AG04450 (cell line): ENCODE measurements at regions of chr15 and their contacts with region 1.

Region 1: GRCh38 chr15:45166834-45167630 is 20.7 kb downstream of the SHF start:
- DNase-seq: peak; percentile 53
- H3K4me3 ChIP-seq: peak overlapping the region; percentile 58
- H3K27ac ChIP-seq: peak overlapping the region; percentile 83
- H3K27me3 ChIP-seq: no peaks in the 10 kb centered on the region
- CTCF ChIP-seq: peak; percentile 71

Region 2: DNA sequence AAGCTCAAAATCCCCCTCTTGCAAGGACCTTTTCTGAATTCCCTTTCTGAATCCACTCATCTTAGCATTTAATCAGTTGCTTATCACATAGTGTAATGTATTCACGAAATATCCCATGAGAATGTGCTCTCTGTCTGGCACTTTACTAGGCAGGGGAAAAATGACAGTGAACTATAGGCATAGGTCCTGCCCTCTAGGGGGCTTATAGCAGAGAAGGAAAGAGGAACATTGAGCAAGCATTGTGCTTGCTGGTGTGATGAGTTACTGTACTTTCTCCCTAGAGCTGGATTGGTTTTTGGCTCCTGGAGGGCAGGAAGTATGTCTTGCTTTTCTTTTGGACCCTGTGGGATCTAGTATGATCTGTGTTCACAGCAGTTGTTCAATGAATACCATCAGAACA is 79.5 kb before region 1 on chr15:
- CTCF ChIA-PET with region 1: no interaction called
- POLR2A ChIA-PET with region 1: no interaction called
- DNase-seq: no peak
- H3K4me3 ChIP-seq: no peak overlapping the region
- H3K27ac ChIP-seq: no peak overlapping the region
- H3K27me3 ChIP-seq: peaks cover 11% of the 10 kb centered on the region
- CTCF ChIP-seq: no peak

Region 3: DNA sequence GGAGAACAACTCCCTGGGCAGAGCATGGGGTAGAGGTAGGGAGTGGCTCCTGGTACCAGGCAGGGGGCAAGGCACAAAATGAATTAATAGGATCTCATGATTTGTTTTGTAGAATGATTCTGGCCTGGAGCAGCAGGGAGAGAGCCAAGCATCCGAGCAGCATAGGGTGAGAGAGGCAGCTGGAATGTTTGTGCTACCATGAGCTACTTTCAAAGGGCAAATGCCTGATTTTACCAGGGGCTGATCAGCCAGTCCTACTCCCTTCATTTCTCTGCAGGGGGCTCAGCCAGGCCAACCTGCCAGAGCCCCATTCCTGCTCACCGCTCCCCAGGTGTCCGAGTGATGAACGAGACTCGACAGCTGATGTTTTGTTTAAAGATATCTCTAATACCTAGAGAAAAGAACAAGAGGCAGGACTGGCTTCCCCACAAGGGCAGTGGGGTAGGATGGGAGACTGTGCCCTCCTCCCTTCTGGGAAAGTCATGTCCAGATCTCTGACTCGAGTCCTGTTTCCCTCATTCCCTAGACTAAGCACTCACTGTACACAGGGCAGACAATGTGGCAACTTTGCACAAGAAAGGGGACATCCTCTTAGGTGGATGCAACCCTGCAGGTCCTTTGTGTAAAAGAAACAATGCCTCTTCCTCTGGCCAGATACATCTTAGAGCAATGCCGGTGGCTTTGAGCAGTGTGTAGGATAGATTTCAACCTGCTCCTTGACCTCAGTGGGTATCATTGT is 66.0 kb before region 1 on chr15:
- CTCF ChIA-PET with region 1: no interaction called
- POLR2A ChIA-PET with region 1: no interaction called
- DNase-seq: no peak
- H3K4me3 ChIP-seq: no peak overlapping the region
- H3K27ac ChIP-seq: no peak overlapping the region
- H3K27me3 ChIP-seq: peaks cover 37% of the 10 kb centered on the region
- CTCF ChIP-seq: no peak

Region 4: GRCh38 chr15:45118131-45118588 is 48.9 kb before region 1 on chr15:
- CTCF ChIA-PET with region 1: interaction called, 16 read pairs
- POLR2A ChIA-PET with region 1: interaction called, 3 read pairs
- DNase-seq: peak; percentile 76
- H3K4me3 ChIP-seq: no peak overlapping the region; the same call in 1 of the 2 replicates
- H3K27ac ChIP-seq: no peak overlapping the region
- H3K27me3 ChIP-seq: peaks cover 46% of the 10 kb centered on the region
- CTCF ChIP-seq: peak; percentile 100

Region 5: GRCh38 chr15:45179221-45179985 is 12.4 kb after region 1 on chr15:
- CTCF ChIA-PET with region 1: interaction called, 27 read pairs
- POLR2A ChIA-PET with region 1: no interaction called
- DNase-seq: no peak
- H3K4me3 ChIP-seq: no peak overlapping the region
- H3K27ac ChIP-seq: no peak overlapping the region
- H3K27me3 ChIP-seq: no peaks in the 10 kb centered on the region
- CTCF ChIP-seq: peak; percentile 39

Region 6: DNA sequence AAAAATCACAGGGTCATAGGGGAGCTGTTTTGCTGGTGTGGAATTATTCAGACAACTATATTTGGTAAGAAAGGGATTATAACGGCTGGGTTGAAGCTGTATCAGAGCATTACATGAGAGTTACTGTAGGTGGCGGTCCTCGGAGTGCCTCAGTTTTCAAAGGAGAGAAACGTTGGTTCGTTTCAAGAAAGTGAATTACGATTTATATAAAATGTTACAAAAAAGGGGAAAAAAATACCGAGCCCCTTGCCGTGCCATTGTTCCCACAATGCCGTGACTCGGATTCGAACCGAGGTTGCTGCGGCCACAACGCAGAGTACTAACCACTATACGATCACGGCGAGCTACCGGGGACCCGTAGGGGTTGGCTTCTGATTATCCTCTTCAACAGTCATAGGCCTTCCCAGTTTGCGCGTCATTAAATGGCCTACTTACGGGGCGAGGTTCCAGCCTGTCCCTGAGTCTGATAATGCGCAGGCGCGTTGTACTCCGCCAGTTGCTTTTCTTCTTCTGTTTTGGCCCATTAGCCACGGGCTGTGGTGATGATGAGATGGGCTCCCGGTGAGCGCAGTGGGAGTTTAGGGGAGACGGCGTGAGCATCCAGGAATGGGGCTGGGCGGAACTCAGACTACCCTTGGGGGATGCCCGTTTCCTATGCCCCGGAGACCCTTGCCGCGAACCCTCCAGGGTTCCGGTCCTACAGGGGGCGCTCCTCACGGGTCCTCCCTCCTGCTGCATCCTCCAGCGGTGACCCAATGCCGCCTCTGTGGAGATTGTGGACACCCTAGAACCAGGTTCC is 31.5 kb after region 1 on chr15:
- CTCF ChIA-PET with region 1: interaction called, 70 read pairs
- POLR2A ChIA-PET with region 1: interaction called, 6 read pairs
- DNase-seq: peak; percentile 95
- H3K4me3 ChIP-seq: peak overlapping the region; percentile 94
- H3K27ac ChIP-seq: peak overlapping the region; percentile 92
- H3K27me3 ChIP-seq: no peaks in the 10 kb centered on the region
- CTCF ChIP-seq: peak; percentile 87

Region 7: DNA sequence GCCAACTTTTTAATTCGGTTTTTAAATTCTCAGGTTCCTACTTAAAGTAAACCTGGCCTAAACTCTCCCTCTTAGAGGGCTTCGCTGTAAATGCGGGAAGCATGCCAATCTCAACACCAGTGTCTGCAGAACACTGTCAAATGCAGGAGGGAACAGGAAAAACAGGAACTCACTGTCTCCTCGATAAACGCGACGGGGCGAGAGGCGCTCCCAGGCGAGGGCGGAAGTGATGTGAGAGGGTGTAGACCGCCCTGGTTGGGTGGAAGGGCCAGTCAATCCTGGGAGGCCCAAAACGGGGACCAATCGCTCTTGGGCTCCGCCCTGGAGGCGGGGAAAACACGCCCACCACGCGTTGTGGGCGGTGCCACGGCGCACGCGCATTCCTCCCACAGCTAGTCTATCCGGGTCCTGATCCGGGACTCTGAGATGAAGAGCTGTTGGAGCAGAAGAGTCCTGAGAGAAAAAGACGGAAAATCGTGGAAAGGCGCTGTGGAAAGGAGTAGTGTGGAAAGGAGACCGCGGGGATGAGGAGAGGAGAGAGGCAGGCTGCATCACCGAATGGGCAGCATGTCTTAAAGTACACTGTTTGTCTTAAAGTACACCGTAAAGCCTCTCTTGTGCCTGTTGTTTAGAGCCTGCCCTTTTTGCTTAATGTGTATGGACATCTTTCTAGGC is 112.1 kb after region 1 on chr15:
- CTCF ChIA-PET with region 1: interaction called, 15 read pairs
- POLR2A ChIA-PET with region 1: interaction called, 3 read pairs
- DNase-seq: peak; percentile 92
- H3K4me3 ChIP-seq: peak overlapping the region; percentile 85
- H3K27ac ChIP-seq: peak overlapping the region; percentile 65
- H3K27me3 ChIP-seq: no peaks in the 10 kb centered on the region
- CTCF ChIP-seq: no peak

Region 8: DNA sequence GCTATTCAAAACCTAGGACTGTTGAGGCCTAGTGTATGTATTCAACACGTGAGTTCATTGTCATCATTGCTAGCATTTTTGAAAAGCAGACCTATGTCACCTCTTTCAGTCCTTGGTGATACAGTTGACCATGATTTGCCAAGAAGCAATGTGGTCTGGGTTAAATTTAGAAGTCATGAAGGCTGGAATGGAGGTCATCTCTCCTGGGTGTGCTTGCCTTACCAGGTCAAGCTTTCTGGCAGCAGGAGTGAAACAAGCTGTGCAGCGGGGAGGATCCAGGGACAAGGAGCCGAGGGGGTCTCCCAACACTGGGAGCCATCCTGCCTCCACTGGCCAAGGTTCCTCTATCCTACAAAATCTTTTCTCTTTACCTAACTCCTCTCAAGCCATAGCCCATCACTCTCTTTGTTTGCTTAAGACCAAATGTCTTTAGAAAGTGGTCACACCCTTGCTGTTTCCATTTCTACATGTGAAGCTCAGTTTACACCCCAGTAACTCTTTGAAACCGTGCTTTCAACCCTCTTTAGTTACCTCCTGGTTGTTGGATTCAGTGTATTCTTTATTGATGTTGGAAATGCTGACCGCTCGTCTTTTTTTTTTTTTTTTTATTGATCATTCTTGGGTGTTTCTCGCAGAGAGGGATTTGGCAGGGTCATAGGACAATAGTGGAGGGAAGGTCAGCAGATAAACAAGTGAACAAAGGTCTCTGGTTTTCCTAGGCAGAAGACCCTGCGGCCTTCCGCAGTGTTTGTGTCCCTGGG is 125.0 kb after region 1 on chr15:
- CTCF ChIA-PET with region 1: no interaction called
- POLR2A ChIA-PET with region 1: no interaction called
- DNase-seq: no peak
- H3K4me3 ChIP-seq: no peak overlapping the region
- H3K27ac ChIP-seq: no peak overlapping the region
- H3K27me3 ChIP-seq: no peaks in the 10 kb centered on the region
- CTCF ChIP-seq: no peak

Region 9: DNA sequence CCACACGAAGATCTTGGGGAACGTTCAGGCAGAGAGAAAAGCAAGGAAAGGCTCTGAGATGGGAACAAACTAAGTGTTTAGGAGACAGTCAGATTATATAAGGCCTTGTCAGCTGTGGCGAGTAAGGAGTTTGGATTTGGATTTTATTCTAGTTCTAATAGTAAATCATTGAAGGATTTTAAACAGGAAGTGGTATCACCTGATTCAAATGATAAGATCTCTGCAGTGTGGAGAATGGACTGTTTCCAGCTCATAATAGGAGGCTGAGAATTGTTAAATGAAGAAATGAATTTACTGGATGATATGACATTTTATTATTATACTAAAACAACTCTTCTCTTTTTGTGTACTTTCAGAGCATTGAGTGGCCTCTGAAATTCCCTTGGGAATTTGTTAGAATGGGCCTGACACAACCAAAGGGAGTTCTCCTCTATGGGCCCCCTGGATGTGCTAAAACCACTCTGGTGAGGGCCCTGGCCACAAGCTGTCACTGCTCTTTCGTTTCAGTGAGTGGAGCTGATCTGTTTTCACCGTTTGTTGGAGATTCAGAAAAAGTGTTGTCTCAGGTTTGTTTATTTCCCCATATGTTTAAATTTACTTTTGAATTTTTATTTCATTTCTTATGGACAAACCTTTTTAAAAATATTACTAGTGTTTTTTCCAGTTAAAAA is 247.3 kb after region 1 on chr15:
- CTCF ChIA-PET with region 1: interaction called, 18 read pairs
- POLR2A ChIA-PET with region 1: no interaction called
- DNase-seq: no peak
- H3K4me3 ChIP-seq: no peak overlapping the region
- H3K27ac ChIP-seq: no peak overlapping the region
- H3K27me3 ChIP-seq: no peaks in the 10 kb centered on the region
- CTCF ChIP-seq: no peak